GM12878 (cell line): ENCODE measurements at regions of chr10 and their contacts with region 1.

Region 1: GRCh38 chr10:70363971-70364771 is 18.3 kb downstream of the LRRC20 start:
- DNase-seq: peak; percentile 65
- ATAC-seq: peak; percentile 96
- H3K4me3 ChIP-seq: no peak overlapping the region
- H3K27ac ChIP-seq: peak overlapping the region; percentile 69
- H3K4me1 ChIP-seq: peaks cover 18% of the 10 kb centered on the region
- H3K27me3 ChIP-seq: no peaks in the 10 kb centered on the region
- CTCF ChIP-seq: peak; percentile 84 to 96 (median 86); a peak in 5 of 6 replicates
- EP300 ChIP-seq: no peak
- POLR2A ChIP-seq: no peak
- RAD21 ChIP-seq: peak; percentile 100

Region 2: DNA sequence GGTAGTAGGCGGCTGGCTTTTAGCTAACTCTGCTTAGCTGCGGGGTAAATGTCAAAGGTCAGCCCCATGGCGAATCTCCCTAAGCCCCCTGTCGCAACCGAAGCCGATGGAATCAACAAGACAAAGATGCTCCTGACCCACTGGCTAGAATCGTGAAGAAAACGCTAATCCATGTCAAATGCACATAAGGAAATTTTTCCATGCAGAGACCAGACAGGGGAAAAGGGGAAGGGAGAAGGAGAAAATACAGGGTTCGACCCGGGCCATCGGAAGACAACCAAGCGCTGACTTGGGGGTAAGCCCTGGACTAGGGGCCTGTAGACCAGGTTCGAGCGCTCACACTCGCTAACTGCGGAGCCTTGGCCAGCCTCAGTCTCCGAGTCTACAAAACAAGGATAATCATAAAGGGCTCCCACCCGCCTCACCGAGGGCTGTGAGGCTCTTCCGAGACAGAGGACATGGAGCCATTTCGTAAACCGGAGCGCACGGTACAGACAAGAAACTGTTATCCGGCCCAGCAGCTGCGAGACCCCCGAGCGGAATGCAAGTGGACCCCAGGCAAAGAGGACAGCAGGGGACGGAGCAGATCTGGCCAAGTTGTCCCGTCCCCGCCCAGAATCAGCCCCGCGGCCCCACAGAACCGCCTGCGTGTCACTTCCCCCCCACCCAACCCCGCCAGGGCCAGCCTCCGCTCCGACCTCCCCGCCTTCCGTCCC is 194.4 kb before region 1 on chr10:
- CTCF ChIA-PET with region 1: interaction called, 9 read pairs
- POLR2A ChIA-PET with region 1: interaction called, 6 read pairs
- RAD21 ChIA-PET with region 1: interaction called, 11 read pairs
- SMC1A ChIA-PET with region 1: interaction called, 6 read pairs
- in situ Hi-C with region 1: no loop called
- intact Hi-C with region 1: loop called (anchors 5 kb)
- DNase-seq: no peak
- ATAC-seq: peak; percentile 35
- H3K4me3 ChIP-seq: peak overlapping the region; percentile 91
- H3K27ac ChIP-seq: peak overlapping the region; percentile 56
- H3K4me1 ChIP-seq: peaks cover 11% of the 10 kb centered on the region
- H3K27me3 ChIP-seq: no peaks in the 10 kb centered on the region
- CTCF ChIP-seq: no peak
- EP300 ChIP-seq: no peak
- POLR2A ChIP-seq: no peak
- RAD21 ChIP-seq: no peak

Region 3: DNA sequence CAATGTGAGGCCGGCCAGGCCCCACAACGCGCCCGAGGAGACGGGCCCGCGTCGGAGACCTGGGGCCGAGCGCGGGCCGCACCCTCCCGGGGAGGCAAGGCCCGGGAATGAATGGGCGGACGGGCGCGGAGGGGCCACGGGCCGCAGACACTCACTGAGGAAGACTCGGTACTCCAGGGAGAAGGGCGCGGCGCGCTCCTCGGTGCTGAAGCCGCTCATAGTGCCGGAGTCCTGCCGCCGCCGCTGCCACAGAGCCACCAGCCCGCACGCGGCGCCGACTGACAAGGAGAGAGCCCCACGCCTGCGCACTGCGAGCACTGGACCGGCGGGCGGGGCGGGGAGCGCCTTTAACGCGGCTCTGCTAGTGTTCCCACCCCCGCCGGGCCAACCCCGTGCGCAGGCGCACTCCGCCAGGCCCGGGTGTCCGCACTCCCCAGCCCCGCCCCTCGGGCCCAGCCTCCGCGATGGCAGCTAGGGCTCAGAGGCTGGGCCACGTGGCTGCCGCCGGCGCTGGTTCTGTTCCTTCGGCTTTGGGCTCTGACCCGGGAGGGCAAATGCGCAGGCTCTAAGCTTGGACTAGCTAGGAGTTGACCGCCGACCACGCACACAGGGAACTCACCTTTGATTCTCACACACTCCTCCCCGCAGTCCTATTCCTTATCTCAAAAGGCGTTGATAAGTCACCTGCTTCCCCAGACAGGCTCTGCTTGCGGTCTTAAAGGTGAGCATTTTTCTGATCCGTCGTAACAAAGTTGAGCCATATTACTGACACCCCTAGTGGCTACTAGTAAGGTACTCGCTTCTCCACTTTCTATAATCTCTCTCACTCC is 130.8 kb before region 1 on chr10 and contains the start of gene PPA1:
- CTCF ChIA-PET with region 1: interaction called, 611 read pairs
- POLR2A ChIA-PET with region 1: interaction called, 14 read pairs
- RAD21 ChIA-PET with region 1: interaction called, 675 read pairs
- SMC1A ChIA-PET with region 1: interaction called, 408 read pairs
- in situ Hi-C with region 1: loop called (anchors 5 kb)
- intact Hi-C with region 1: no loop called
- DNase-seq: peak; percentile 80
- ATAC-seq: peak; percentile 92
- H3K4me3 ChIP-seq: peak within 1 kb of the TSS; percentile 93
- H3K27ac ChIP-seq: peak within 1 kb of the TSS; percentile 76
- H3K4me1 ChIP-seq: no peaks in the 10 kb centered on the region
- H3K27me3 ChIP-seq: no peaks in the 10 kb centered on the region
- CTCF ChIP-seq: peak in 2 of 3 experiments; percentile 20 to 31; a peak in 3 of 6 replicates
- EP300 ChIP-seq: no peak
- POLR2A ChIP-seq: peak; percentile 95
- RAD21 ChIP-seq: no peak
- polyA plus RNA-seq, gene PPA1: 224 to 386 TPM

Region 4: DNA sequence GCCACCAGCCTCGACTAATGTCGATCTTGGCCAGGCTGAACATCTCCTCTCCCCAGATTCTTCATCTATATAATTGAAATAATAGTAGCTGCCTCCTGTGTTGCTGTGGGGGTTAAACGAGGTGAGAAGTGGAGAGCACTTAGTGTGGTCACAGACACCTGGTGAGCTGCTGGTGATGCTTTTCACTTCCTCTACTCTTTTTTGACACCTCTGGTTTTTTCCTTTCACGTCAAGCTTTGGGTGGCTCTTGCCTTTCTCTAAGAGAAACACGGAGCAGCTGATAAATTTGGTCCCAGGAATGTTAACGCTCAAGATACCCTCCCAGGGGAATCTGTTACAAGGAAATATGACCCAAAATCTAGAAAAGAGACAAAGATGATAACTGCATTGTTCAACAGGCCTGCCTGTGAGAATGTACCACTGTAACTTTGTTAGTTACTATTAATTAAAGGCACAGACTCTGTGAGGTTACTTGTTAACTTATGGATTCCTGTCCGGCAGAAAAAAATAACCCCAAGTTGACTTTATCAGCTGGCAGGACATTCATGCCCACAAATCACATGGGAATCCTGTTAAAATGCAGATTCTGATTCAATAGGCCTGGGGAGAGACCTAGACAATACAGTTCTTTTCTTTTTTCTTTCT is 70.9 kb before region 1 on chr10:
- CTCF ChIA-PET with region 1: interaction called, 22 read pairs
- POLR2A ChIA-PET with region 1: interaction called, 3 read pairs
- RAD21 ChIA-PET with region 1: interaction called, 29 read pairs
- SMC1A ChIA-PET with region 1: interaction called, 16 read pairs
- in situ Hi-C with region 1: no loop called
- intact Hi-C with region 1: no loop called
- DNase-seq: peak; percentile 71
- ATAC-seq: peak; percentile 96
- H3K4me3 ChIP-seq: no peak overlapping the region
- H3K27ac ChIP-seq: peak overlapping the region; percentile 41
- H3K4me1 ChIP-seq: peaks cover 16% of the 10 kb centered on the region
- H3K27me3 ChIP-seq: no peaks in the 10 kb centered on the region
- CTCF ChIP-seq: no peak
- EP300 ChIP-seq: peak; percentile 77 to 84; a peak in 3 of 4 replicates
- POLR2A ChIP-seq: no peak
- RAD21 ChIP-seq: no peak

Region 5: GRCh38 chr10:70343312-70343711 is 20.9 kb before region 1 on chr10:
- CTCF ChIA-PET with region 1: interaction called, 72 read pairs
- POLR2A ChIA-PET with region 1: interaction called, 5 read pairs
- RAD21 ChIA-PET with region 1: interaction called, 42 read pairs
- SMC1A ChIA-PET with region 1: interaction called, 11 read pairs
- in situ Hi-C with region 1: no loop called
- intact Hi-C with region 1: no loop called
- DNase-seq: no peak
- ATAC-seq: no peak
- H3K4me3 ChIP-seq: no peak overlapping the region
- H3K27ac ChIP-seq: no peak overlapping the region
- H3K4me1 ChIP-seq: peaks cover 7% of the 10 kb centered on the region
- H3K27me3 ChIP-seq: no peaks in the 10 kb centered on the region
- CTCF ChIP-seq: no peak
- EP300 ChIP-seq: no peak
- POLR2A ChIP-seq: no peak
- RAD21 ChIP-seq: no peak